H1 (cell line): ENCODE measurements at regions of chr11 and their contacts with region 1.

Region 1: GRCh38 chr11:113289431-113290187 is 24.8 kb upstream of the TTC12 start:
- DNase-seq: peak; percentile 36 to 86
- H3K4me3 ChIP-seq: no peak overlapping the region
- H3K27ac ChIP-seq: no peak overlapping the region
- H3K4me1 ChIP-seq: peaks cover 0 to 7% (median 0%) of the 10 kb centered on the region in 4 experiments; a peak in 1 of 7 replicates
- H3K27me3 ChIP-seq: no peaks in the 10 kb centered on the region; a peak in 1 of 7 replicates
- CTCF ChIP-seq: peak; percentile 91 to 98 (median 95)
- EP300 ChIP-seq: no peak
- POLR2A ChIP-seq: no peak
- RAD21 ChIP-seq: peak; percentile 99

Region 2: DNA sequence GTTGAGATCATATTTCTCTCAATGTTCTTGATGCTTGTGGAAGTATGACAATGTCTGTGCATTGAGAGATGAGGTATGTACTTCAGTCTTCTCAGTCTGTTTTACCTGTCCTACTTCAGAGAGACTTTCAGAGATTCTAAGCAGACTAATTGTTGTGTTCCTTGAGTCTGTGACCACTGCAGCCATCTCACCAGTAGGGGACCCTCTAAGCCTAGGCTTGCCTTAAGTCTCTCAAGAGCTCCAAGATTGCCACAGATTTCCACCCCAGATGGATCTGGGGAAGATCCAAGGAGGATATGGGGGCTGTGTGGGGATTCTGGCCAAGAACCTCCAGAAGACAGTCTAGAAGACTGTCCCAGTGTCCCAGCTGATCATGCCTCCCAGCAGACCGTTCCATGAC is 849.1 kb before region 1 on chr11:
- CTCF ChIA-PET with region 1: interaction called, 14 read pairs
- POLR2A ChIA-PET with region 1: no interaction called
- DNase-seq: peak in 1 of 2 experiments; percentile 29
- H3K4me3 ChIP-seq: no peak overlapping the region
- H3K27ac ChIP-seq: no peak overlapping the region
- H3K4me1 ChIP-seq: no peaks in the 10 kb centered on the region
- H3K27me3 ChIP-seq: peaks cover 0 to 1% (median 0%) of the 10 kb centered on the region in 4 experiments; a peak in 2 of 7 replicates
- CTCF ChIP-seq: peak; percentile 40 to 93 (median 86)
- EP300 ChIP-seq: no peak
- POLR2A ChIP-seq: no peak
- RAD21 ChIP-seq: peak; percentile 96 to 99

Region 3: DNA sequence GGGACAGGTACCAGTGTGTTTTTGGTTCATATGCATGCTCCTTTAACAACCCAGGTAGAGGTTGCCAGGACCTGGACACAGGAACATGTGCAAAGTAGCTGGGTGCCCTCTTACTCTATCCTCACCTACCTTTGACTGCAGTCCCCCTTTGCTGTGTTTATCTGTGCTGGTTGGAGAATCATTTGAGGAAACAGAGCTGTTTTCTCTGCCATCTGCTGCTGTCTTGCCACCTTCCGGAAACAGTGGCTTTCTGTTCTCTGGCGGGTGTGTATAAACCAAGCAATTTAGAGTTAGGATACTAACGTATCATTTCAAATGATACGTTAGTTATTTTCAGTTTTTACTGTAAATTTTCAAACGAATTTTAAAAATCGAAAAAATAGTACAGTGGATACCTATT is 147.1 kb before region 1 on chr11:
- CTCF ChIA-PET with region 1: interaction called, 10 read pairs
- POLR2A ChIA-PET with region 1: no interaction called
- DNase-seq: no peak
- H3K4me3 ChIP-seq: no peak overlapping the region
- H3K27ac ChIP-seq: no peak overlapping the region
- H3K4me1 ChIP-seq: peaks cover 0 to 2% (median under 1%) of the 10 kb centered on the region in 4 experiments; a peak in 1 of 7 replicates
- H3K27me3 ChIP-seq: no peaks in the 10 kb centered on the region
- CTCF ChIP-seq: no peak
- EP300 ChIP-seq: no peak
- POLR2A ChIP-seq: no peak
- RAD21 ChIP-seq: no peak

Region 4: DNA sequence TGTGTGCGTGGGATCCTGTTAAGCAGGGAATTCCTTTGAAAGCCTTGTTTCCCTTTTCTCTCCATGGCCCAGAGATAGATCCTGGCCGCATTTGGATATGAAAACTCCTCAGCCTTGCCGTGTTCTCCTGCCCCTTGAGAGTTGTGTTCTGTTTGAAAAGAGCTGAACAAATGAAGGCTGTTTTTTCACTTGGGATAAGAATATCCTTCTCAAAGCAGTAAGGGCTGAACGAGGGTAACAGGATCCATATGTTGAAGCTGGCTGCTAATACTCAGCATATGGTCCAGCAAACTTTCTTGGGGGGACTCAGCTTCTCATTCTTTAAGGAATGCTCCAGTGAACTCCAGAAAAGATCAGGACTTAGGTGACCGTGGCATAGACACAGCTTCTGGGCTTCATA is 89.7 kb before region 1 on chr11:
- CTCF ChIA-PET with region 1: no interaction called
- POLR2A ChIA-PET with region 1: no interaction called
- DNase-seq: no peak
- H3K4me3 ChIP-seq: no peak overlapping the region
- H3K27ac ChIP-seq: no peak overlapping the region
- H3K4me1 ChIP-seq: no peaks in the 10 kb centered on the region
- H3K27me3 ChIP-seq: no peaks in the 10 kb centered on the region
- CTCF ChIP-seq: no peak
- EP300 ChIP-seq: no peak
- POLR2A ChIP-seq: no peak
- RAD21 ChIP-seq: no peak

Region 5: DNA sequence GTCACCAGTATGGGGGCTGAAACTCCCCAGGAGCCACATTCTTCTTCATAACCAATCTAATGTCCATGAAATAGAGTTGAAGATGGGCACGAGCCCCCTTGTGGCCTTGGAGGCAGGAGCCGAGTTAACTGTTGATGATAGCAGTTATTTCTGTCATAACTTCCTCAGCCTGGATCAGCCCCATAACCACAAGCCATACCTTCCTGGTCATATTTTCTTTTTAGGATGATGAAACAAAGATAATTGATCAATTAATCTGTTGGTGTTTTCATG is 40.2 kb before region 1 on chr11:
- CTCF ChIA-PET with region 1: interaction called, 18 read pairs
- POLR2A ChIA-PET with region 1: no interaction called
- DNase-seq: no peak
- H3K4me3 ChIP-seq: no peak overlapping the region
- H3K27ac ChIP-seq: no peak overlapping the region
- H3K4me1 ChIP-seq: peaks cover 0 to 9% (median under 1%) of the 10 kb centered on the region in 4 experiments; a peak in 4 of 7 replicates
- H3K27me3 ChIP-seq: no peaks in the 10 kb centered on the region
- CTCF ChIP-seq: peak; percentile 26 to 51 (median 33); a peak in 3 of 4 replicates
- EP300 ChIP-seq: no peak
- POLR2A ChIP-seq: no peak
- RAD21 ChIP-seq: peak; percentile 36 to 37